Naive thymus-derived CD4-positive, alpha-beta T cell (primary cell): ENCODE measurements at regions of chr7 and their contacts with region 1.

Region 1: GRCh38 chr7:154913638-154914312 is 89.1 kb downstream of the PAXIP1 start:
- DNase-seq: peak; percentile 71 to 89 (median 82)
- ATAC-seq: peak; percentile 96
- H3K4me3 ChIP-seq: peak overlapping the region; percentile 56
- H3K4me3 Mint-ChIP-seq: peak overlapping the region; percentile 76 to 95 (median 90)
- H3K27ac ChIP-seq: no peak overlapping the region
- H3K27ac Mint-ChIP-seq: peak overlapping the region in 8 of 9 donors; percentile 17 to 85 (median 66)
- H3K4me1 ChIP-seq: no peaks in the 10 kb centered on the region
- H3K4me1 Mint-ChIP-seq: peaks cover 3 to 7% (median 4%) of the 10 kb centered on the region in 7 donors
- H3K27me3 ChIP-seq: no peaks in the 10 kb centered on the region
- H3K27me3 Mint-ChIP-seq: peaks cover 4 to 25% (median 14%) of the 10 kb centered on the region in 5 donors

Region 2: GRCh38 chr7:154953006-154953684 is 39.4 kb after region 1 on chr7:
- CTCF ChIA-PET with region 1: interaction called, 27 read pairs
- POLR2A ChIA-PET with region 1: no interaction called
- intact Hi-C with region 1: loop called (anchors 1 kb)
- DNase-seq: peak; percentile 41 to 63 (median 57)
- ATAC-seq: peak; percentile 82
- H3K4me3 ChIP-seq: no peak overlapping the region
- H3K4me3 Mint-ChIP-seq: no peak overlapping the region
- H3K27ac ChIP-seq: no peak overlapping the region
- H3K27ac Mint-ChIP-seq: peak overlapping the region in 3 of 9 donors; percentile 25 to 67 (median 40)
- H3K4me1 ChIP-seq: no peaks in the 10 kb centered on the region
- H3K4me1 Mint-ChIP-seq: peaks cover 0 to 2% (median 0%) of the 10 kb centered on the region in 7 donors
- H3K27me3 ChIP-seq: no peaks in the 10 kb centered on the region
- H3K27me3 Mint-ChIP-seq: no peaks in the 10 kb centered on the region

Region 3: GRCh38 chr7:155190688-155191087 is 276.9 kb after region 1 on chr7:
- CTCF ChIA-PET with region 1: no interaction called
- POLR2A ChIA-PET with region 1: no interaction called
- intact Hi-C with region 1: loop called in 1 of 2 experiments (anchors 1 kb)
- DNase-seq: peak in 7 of 9 donors; percentile 28 to 76 (median 48)
- ATAC-seq: peak; percentile 83
- H3K4me3 ChIP-seq: no peak overlapping the region
- H3K4me3 Mint-ChIP-seq: peak overlapping the region in 4 of 10 donors; percentile 32 to 59 (median 48)
- H3K27ac ChIP-seq: no peak overlapping the region
- H3K27ac Mint-ChIP-seq: no peak overlapping the region
- H3K4me1 ChIP-seq: no peaks in the 10 kb centered on the region
- H3K4me1 Mint-ChIP-seq: peaks cover 0 to 17% (median 3%) of the 10 kb centered on the region in 7 donors
- H3K27me3 ChIP-seq: no peaks in the 10 kb centered on the region
- H3K27me3 Mint-ChIP-seq: peaks cover 2 to 17% (median 8%) of the 10 kb centered on the region in 5 donors

Region 4: GRCh38 chr7:155738652-155739537 is 825.1 kb after region 1 on chr7:
- CTCF ChIA-PET with region 1: no interaction called
- POLR2A ChIA-PET with region 1: no interaction called
- intact Hi-C with region 1: loop called in 1 of 2 experiments (anchors 5 kb)
- DNase-seq: peak; percentile 27 to 85 (median 77)
- ATAC-seq: peak; percentile 93
- H3K4me3 ChIP-seq: no peak overlapping the region
- H3K4me3 Mint-ChIP-seq: peak overlapping the region in 9 of 10 donors; percentile 15 to 71 (median 62)
- H3K27ac ChIP-seq: peak overlapping the region; percentile 30
- H3K27ac Mint-ChIP-seq: peak overlapping the region; percentile 24 to 97 (median 87)
- H3K4me1 ChIP-seq: peaks cover 0 to 12% of the 10 kb centered on the region in 2 donors
- H3K4me1 Mint-ChIP-seq: peaks cover 17 to 71% (median 49%) of the 10 kb centered on the region in 7 donors
- H3K27me3 ChIP-seq: no peaks in the 10 kb centered on the region
- H3K27me3 Mint-ChIP-seq: no peaks in the 10 kb centered on the region